ENCODE measurements at regions of chr12 and their contacts with region 1.

Region 1: DNA sequence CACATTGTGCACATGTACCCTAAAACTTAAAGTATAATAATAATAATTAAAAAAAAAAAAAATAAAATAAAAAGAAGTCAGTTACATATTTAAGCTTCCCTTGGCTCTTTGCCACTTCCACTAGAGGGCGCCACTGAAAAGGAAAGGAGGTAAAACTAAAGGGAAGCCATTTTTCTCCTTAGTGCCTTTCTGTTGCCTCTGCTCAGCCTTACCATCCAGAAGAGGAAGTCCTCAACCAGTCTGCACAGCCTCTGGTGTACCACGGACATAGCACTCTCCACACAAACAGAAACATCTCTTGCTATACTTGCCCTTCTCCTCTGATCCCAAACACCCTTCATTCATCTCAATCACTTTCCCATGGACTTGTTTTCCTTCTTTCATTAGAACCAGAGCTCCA is 169.0 kb upstream of the EEA1 start:
- DNase-seq: peak; percentile 90
- ATAC-seq: peak; percentile 97
- H3K4me3 ChIP-seq: no peak overlapping the region
- H3K4me3 Mint-ChIP-seq: peak overlapping the region; percentile 36
- H3K27ac ChIP-seq: no peak overlapping the region
- H3K27ac Mint-ChIP-seq: peak overlapping the region; percentile 73
- H3K4me1 ChIP-seq: peaks cover 13 to 14% of the 10 kb centered on the region in 2 donors
- H3K4me1 Mint-ChIP-seq: peaks cover 22% of the 10 kb centered on the region
- H3K27me3 ChIP-seq: no peaks in the 10 kb centered on the region
- H3K27me3 Mint-ChIP-seq: no peaks in the 10 kb centered on the region
- CTCF ChIP-seq: peak; percentile 83

Region 2: GRCh38 chr12:92784795-92785562 is 313.1 kb before region 1 on chr12:
- CTCF ChIA-PET with region 1: no interaction called
- POLR2A ChIA-PET with region 1: no interaction called
- intact Hi-C with region 1: loop called (anchors 5 kb)
- DNase-seq: peak; percentile 75
- ATAC-seq: peak; percentile 98
- H3K4me3 ChIP-seq: no peak overlapping the region
- H3K4me3 Mint-ChIP-seq: no peak overlapping the region
- H3K27ac ChIP-seq: no peak overlapping the region
- H3K27ac Mint-ChIP-seq: no peak overlapping the region
- H3K4me1 ChIP-seq: no peaks in the 10 kb centered on the region
- H3K4me1 Mint-ChIP-seq: no peaks in the 10 kb centered on the region
- H3K27me3 ChIP-seq: no peaks in the 10 kb centered on the region
- H3K27me3 Mint-ChIP-seq: no peaks in the 10 kb centered on the region
- CTCF ChIP-seq: peak; percentile 81

Region 3: DNA sequence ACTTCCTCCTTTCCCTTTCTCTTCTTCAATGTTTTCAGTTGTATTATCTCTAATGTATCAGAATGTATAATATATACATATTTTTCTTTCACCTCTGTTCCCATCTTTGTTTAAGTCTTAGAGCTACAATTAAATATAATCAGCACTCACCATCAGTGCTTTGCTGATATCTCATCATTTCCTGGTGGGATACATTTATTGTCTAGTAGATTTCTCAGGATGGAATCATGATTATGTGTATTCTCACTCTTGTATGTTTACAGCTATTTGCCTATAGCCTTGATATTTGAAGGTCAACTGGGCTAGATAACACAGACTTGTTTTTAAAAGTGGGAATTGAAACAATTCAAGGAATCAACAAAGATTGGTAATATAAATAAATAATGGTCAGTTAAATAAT is 44.1 kb before region 1 on chr12:
- CTCF ChIA-PET with region 1: no interaction called
- POLR2A ChIA-PET with region 1: no interaction called
- intact Hi-C with region 1: no loop called
- DNase-seq: no peak
- ATAC-seq: no peak
- H3K4me3 ChIP-seq: no peak overlapping the region
- H3K4me3 Mint-ChIP-seq: no peak overlapping the region
- H3K27ac ChIP-seq: no peak overlapping the region
- H3K27ac Mint-ChIP-seq: no peak overlapping the region
- H3K4me1 ChIP-seq: no peaks in the 10 kb centered on the region
- H3K4me1 Mint-ChIP-seq: peaks cover 1% of the 10 kb centered on the region
- H3K27me3 ChIP-seq: no peaks in the 10 kb centered on the region
- H3K27me3 Mint-ChIP-seq: peaks cover 12% of the 10 kb centered on the region
- CTCF ChIP-seq: no peak

Region 4: GRCh38 chr12:93137656-93138612 is 39.9 kb after region 1 on chr12:
- CTCF ChIA-PET with region 1: interaction called, 17 read pairs
- POLR2A ChIA-PET with region 1: no interaction called
- intact Hi-C with region 1: loop called (anchors 5 kb)
- DNase-seq: no peak
- ATAC-seq: no peak
- H3K4me3 ChIP-seq: peak overlapping the region in 1 of 5 experiments; percentile 41
- H3K4me3 Mint-ChIP-seq: peak overlapping the region; percentile 51
- H3K27ac ChIP-seq: peak overlapping the region; percentile 65 to 87
- H3K27ac Mint-ChIP-seq: peak overlapping the region; percentile 94
- H3K4me1 ChIP-seq: peaks cover 59 to 64% of the 10 kb centered on the region in 2 donors
- H3K4me1 Mint-ChIP-seq: peaks cover 57% of the 10 kb centered on the region
- H3K27me3 ChIP-seq: no peaks in the 10 kb centered on the region
- H3K27me3 Mint-ChIP-seq: no peaks in the 10 kb centered on the region
- CTCF ChIP-seq: no peak

Region 5: GRCh38 chr12:93167841-93168492 is 69.9 kb after region 1 on chr12:
- CTCF ChIA-PET with region 1: interaction called, 6 read pairs
- POLR2A ChIA-PET with region 1: interaction called, 5 read pairs
- intact Hi-C with region 1: loop called (anchors 1 kb)
- DNase-seq: peak; percentile 79
- ATAC-seq: peak; percentile 69
- H3K4me3 ChIP-seq: peak overlapping the region; percentile 15 to 59 (median 33)
- H3K4me3 Mint-ChIP-seq: peak overlapping the region; percentile 81
- H3K27ac ChIP-seq: peak overlapping the region; percentile 74 to 88
- H3K27ac Mint-ChIP-seq: peak overlapping the region; percentile 85
- H3K4me1 ChIP-seq: peaks cover 65 to 68% of the 10 kb centered on the region in 2 donors
- H3K4me1 Mint-ChIP-seq: peaks cover 51% of the 10 kb centered on the region
- H3K27me3 ChIP-seq: no peaks in the 10 kb centered on the region
- H3K27me3 Mint-ChIP-seq: no peaks in the 10 kb centered on the region
- CTCF ChIP-seq: no peak

Region 6: DNA sequence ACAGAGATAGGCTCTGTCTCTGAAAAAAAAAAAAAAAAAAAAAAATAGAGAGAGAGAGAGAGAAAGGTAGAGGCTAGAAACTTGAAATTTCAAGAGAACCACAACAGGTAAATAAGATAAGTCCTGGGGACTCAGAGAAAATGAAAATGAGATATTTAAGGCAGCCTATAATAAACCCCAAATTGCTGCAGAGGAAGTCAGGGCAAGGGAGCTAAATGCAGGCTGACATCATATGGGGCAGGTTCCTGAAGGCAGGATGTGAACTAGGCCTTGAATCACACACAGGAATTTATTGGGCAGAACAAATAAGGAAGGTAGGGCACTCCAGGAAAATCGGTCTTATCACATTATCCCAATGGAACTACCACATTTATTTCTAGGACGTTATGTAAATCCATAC is 224.7 kb after region 1 on chr12:
- CTCF ChIA-PET with region 1: no interaction called
- POLR2A ChIA-PET with region 1: no interaction called
- intact Hi-C with region 1: no loop called
- DNase-seq: no peak
- ATAC-seq: no peak
- H3K4me3 ChIP-seq: no peak overlapping the region
- H3K4me3 Mint-ChIP-seq: no peak overlapping the region
- H3K27ac ChIP-seq: no peak overlapping the region
- H3K27ac Mint-ChIP-seq: no peak overlapping the region
- H3K4me1 ChIP-seq: no peaks in the 10 kb centered on the region
- H3K4me1 Mint-ChIP-seq: no peaks in the 10 kb centered on the region
- H3K27me3 ChIP-seq: no peaks in the 10 kb centered on the region
- H3K27me3 Mint-ChIP-seq: no peaks in the 10 kb centered on the region
- CTCF ChIP-seq: no peak

Region 7: DNA sequence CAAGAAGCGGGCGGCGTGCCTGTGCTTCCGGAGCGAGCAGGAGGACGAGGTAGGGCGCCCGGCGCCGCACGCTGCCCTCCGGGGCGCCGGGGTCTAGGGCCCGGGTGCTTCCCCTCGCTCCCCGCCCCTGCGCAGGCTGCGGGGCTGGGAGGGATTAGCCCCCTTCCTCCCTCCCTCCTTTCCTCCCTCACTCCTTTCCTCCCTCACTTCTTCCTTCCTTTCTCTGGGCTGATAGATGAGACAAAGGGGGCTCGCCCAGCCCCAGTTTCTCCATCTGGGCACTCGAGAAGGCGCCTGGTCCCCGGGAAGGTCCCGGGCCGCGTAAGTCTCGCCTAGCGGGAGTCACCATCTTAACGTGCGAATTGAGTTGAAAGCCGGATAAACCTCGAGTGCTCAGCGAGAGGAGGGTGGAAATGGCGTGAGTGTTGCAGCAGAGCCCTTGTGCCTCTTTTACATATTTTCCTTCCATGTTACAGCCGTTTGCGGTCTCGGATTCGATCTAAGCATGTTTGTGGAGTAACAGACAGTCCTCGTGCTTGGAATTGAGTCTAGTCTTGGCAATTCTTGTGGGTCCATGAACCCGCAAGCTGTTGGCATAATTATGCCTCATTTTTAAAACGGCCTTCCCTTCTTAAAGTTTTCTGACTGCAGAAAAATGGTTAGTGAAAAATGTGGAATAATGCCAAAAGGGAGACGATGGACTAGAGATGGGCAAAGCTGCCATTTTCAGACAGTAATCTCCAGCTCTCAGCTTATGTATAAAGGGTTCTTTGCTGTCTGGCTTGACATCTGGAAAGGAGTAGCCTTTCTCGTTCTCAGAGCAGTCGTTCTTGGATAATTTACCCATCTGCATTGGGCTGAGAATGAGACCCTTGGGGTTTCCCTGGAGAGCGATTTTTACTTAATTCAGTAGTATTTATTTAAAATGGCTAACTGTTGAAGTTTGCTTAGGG is 280.6 kb after region 1 on chr12:
- CTCF ChIA-PET with region 1: interaction called, 30 read pairs
- POLR2A ChIA-PET with region 1: no interaction called
- intact Hi-C with region 1: loop called (anchors 1 kb)
- DNase-seq: peak; percentile 76
- ATAC-seq: peak; percentile 44
- H3K4me3 ChIP-seq: peak overlapping the region; percentile 73 to 96 (median 86)
- H3K4me3 Mint-ChIP-seq: peak overlapping the region; percentile 98
- H3K27ac ChIP-seq: peak overlapping the region; percentile 75 to 89
- H3K27ac Mint-ChIP-seq: peak overlapping the region; percentile 98
- H3K4me1 ChIP-seq: peaks cover 20 to 29% of the 10 kb centered on the region in 2 donors
- H3K4me1 Mint-ChIP-seq: peaks cover 40% of the 10 kb centered on the region
- H3K27me3 ChIP-seq: no peaks in the 10 kb centered on the region
- H3K27me3 Mint-ChIP-seq: no peaks in the 10 kb centered on the region
- CTCF ChIP-seq: no peak